ENCODE measurements at regions of chr1 and their contacts with region 1.

Region 1: GRCh38 chr1:38026592-38027200 is 14.2 kb downstream of the UTP11 start:
- DNase-seq: peak; percentile 60
- ATAC-seq: no peak

Region 2: GRCh38 chr1:38834937-38835827 is 808.5 kb after region 1 on chr1:
- intact Hi-C with region 1: loop called (anchors 5 kb)
- DNase-seq: no peak
- ATAC-seq: peak; percentile 86